ENCODE measurements at regions of chr11 and their contacts with region 1.

Region 1: DNA sequence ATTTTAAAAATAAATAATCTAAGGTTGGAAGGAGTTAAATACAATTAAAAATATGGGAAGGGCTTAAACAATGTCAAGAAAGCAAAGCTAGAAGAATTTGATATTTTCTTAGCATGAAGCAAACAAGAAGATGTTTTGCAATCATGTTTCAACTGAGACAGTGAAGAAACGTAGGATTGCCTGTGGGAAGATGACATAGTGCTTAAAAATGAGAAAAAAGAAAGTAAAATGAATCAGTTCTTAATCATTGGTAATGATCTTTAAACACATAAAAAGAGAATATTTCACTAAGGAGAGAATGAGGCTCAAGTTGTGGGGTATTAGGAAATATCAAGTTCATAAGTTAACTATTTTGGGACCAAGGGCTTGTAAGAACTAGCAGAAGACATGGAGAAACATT is 855.0 kb downstream of the METTL15 start:
- DNase-seq: peak; percentile 83
- ATAC-seq: peak; percentile 36
- H3K4me3 ChIP-seq: no peak overlapping the region
- H3K27ac ChIP-seq: peak overlapping the region; percentile 87; the same call in 1 of the 2 replicates
- H3K4me1 ChIP-seq: peaks cover 13% of the 10 kb centered on the region
- H3K27me3 ChIP-seq: no peaks in the 10 kb centered on the region
- CTCF ChIP-seq: no peak
- POLR2A ChIP-seq: no peak
- RAD21 ChIP-seq: no peak

Region 2: DNA sequence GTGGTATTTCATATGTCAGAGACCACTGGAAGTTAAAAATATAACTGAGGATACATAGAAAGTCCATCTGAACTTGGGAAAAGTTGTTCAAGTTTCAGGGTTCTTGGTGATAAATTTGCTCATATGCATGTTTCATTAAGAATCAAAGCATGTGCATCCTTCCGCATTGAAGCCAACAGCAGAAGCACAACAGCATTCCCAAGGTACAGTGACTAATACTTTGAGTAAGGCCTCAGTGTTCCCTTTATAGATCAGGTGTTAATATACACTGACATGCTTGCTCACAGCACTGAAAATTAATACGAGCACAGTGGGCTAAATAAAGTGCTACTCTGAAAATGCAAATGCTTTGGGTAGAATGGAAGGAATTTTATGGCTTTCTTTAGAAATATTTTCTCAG is 163.9 kb before region 1 on chr11:
- CTCF ChIA-PET with region 1: no interaction called
- POLR2A ChIA-PET with region 1: no interaction called
- dilution Hi-C with region 1: no loop called
- in situ Hi-C with region 1: no loop called
- intact Hi-C with region 1: no loop called
- DNase-seq: no peak
- ATAC-seq: no peak
- H3K4me3 ChIP-seq: no peak overlapping the region
- H3K27ac ChIP-seq: no peak overlapping the region
- H3K4me1 ChIP-seq: no peaks in the 10 kb centered on the region
- H3K27me3 ChIP-seq: no peaks in the 10 kb centered on the region
- CTCF ChIP-seq: no peak
- POLR2A ChIP-seq: no peak
- RAD21 ChIP-seq: no peak

Region 3: DNA sequence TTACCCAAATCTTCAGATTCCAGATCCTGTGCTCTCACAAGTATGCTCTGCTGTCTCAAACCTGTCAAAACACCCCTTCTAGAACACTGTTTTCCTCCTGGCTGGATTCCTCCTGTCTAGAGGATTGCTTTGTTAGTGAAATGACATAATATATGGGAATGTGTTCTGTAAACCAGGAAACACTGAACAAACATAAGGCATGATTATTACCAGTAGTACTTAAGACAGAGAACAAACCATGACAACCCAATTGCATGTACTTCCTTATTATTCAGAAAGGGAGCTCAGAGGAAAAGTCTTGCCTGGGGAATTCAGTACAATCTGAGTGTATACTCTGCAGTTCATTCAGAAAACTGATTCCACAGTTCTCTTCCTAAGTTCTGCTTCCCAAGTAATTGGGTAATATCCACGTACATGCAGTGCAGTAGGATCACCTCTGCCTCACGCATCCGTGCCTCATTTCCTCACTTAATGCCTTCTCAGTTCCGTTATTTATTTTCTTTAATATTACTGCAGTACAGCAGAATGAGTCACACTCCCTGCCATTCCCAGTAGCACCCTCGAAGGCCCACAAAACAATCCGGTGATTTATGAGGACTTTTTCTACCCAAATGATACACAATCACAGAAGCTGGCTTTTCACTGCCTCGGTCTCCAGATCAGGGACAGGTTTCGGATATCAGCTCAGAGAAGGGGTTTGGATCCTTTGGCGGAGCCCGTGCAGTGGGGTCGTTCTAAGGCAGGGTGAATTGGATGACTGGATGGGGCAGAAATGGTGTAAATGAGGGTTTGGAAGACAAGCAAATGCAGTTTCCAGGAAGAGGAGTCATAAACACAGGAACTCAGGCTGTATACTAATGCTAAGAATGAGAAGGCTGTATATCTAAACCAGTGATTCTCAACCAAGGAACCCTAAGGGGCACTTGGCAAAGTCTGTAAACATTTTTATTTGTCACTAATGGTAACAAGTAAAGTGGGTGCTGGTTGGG is 156.8 kb after region 1 on chr11:
- CTCF ChIA-PET with region 1: no interaction called
- POLR2A ChIA-PET with region 1: interaction called, 3 read pairs
- dilution Hi-C with region 1: no loop called
- in situ Hi-C with region 1: no loop called
- intact Hi-C with region 1: loop called (anchors 1 kb)
- DNase-seq: peak; percentile 99
- ATAC-seq: peak; percentile 86
- H3K4me3 ChIP-seq: peak overlapping the region; percentile 23; the same call in 1 of the 2 replicates
- H3K27ac ChIP-seq: peak overlapping the region; percentile 92
- H3K4me1 ChIP-seq: peaks cover 9% of the 10 kb centered on the region
- H3K27me3 ChIP-seq: no peaks in the 10 kb centered on the region
- CTCF ChIP-seq: no peak
- POLR2A ChIP-seq: peak; percentile 26; the same call in 1 of the 2 replicates
- RAD21 ChIP-seq: peak; percentile 8; the same call in 1 of the 2 replicates

Measured in IMR-90 (cell line).